ENCODE measurements at regions of chr15 and their contacts with region 1.

Region 1: DNA sequence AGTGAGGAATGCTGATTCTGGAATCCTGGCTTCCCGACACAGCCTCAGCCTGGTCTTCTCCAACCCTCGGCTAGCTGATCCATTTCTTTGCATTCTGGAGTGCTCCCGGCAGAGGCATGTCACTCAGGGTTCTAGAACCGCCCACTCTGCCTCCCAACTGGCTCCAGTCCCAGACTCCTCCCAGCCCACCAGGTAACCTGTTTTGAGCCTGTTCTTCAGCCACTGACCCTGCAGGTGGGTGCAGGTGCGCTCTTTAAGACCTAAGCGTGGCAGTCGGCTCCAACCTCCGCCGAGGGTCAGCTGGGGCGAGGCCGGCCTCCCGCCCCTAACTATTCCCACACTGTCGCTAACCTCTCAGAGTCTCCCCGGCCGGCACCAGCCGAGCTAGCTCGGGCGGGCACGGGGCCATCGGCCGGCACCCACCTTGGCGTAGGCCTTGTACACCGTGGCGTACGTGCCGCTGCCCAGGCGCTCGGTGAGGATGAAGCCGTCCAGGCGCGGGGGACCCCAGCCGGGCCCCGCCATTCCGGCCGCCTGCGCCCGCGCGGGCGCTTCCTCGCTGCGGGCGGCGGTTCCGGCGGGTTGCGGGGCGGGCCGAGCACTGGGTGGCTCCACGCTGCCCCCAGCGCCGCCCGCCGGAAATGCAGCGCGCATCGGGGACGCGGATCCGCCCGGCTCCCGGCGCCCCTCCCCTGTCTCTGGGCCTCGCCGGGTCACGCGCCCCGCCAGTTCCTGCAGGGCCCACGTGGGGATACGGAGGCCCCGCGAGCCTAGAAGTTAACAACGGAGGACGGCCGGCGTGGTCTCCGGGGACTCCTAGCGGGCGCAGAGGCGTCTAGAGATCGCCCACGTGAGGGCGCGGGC is at the start of gene ULK3:
- DNase-seq: peak; percentile 95
- ATAC-seq: peak; percentile 95
- H3K4me3 ChIP-seq: peak within 1 kb of the TSS; percentile 65 to 88 (median 72)
- H3K4me3 Mint-ChIP-seq: peak within 1 kb of the TSS; percentile 91
- H3K27ac ChIP-seq: peak within 1 kb of the TSS; percentile 78 to 81
- H3K27ac Mint-ChIP-seq: peak within 1 kb of the TSS; percentile 92
- H3K4me1 ChIP-seq: peaks cover 26 to 40% of the 10 kb centered on the region in 2 donors
- H3K4me1 Mint-ChIP-seq: peaks cover 43% of the 10 kb centered on the region
- H3K27me3 ChIP-seq: no peaks in the 10 kb centered on the region
- H3K27me3 Mint-ChIP-seq: no peaks in the 10 kb centered on the region
- CTCF ChIP-seq: peak; percentile 80
- total RNA-seq, gene ULK3: 51.1 and 55.9 TPM in 2 replicates

Region 2: GRCh38 chr15:74787251-74788041 is 55.4 kb before region 1 on chr15:
- CTCF ChIA-PET with region 1: interaction called, 7 read pairs
- POLR2A ChIA-PET with region 1: interaction called, 3 read pairs
- intact Hi-C with region 1: loop called (anchors 5 kb)
- DNase-seq: peak; percentile 98
- ATAC-seq: peak; percentile 57
- H3K4me3 ChIP-seq: peak overlapping the region; percentile 67 to 99 (median 86)
- H3K4me3 Mint-ChIP-seq: peak overlapping the region; percentile 93
- H3K27ac ChIP-seq: peak overlapping the region; percentile 90 to 93
- H3K27ac Mint-ChIP-seq: peak overlapping the region; percentile 99
- H3K4me1 ChIP-seq: peaks cover 61 to 91% of the 10 kb centered on the region in 2 donors
- H3K4me1 Mint-ChIP-seq: peaks cover 94% of the 10 kb centered on the region
- H3K27me3 ChIP-seq: no peaks in the 10 kb centered on the region
- H3K27me3 Mint-ChIP-seq: no peaks in the 10 kb centered on the region
- CTCF ChIP-seq: peak; percentile 75

Region 3: GRCh38 chr15:74857082-74857655 is 14.4 kb after region 1 on chr15:
- CTCF ChIA-PET with region 1: interaction called, 8 read pairs
- POLR2A ChIA-PET with region 1: interaction called, 10 read pairs
- intact Hi-C with region 1: no loop called
- DNase-seq: peak; percentile 61
- ATAC-seq: peak; percentile 67
- H3K4me3 ChIP-seq: no peak overlapping the region
- H3K4me3 Mint-ChIP-seq: peak overlapping the region; percentile 69
- H3K27ac ChIP-seq: peak overlapping the region in 1 of 2 donors; percentile 67
- H3K27ac Mint-ChIP-seq: peak overlapping the region; percentile 82
- H3K4me1 ChIP-seq: peaks cover 34 to 46% of the 10 kb centered on the region in 2 donors
- H3K4me1 Mint-ChIP-seq: peaks cover 40% of the 10 kb centered on the region
- H3K27me3 ChIP-seq: no peaks in the 10 kb centered on the region
- H3K27me3 Mint-ChIP-seq: no peaks in the 10 kb centered on the region
- CTCF ChIP-seq: no peak

Region 4: GRCh38 chr15:74889883-74890664 is 47.3 kb after region 1 on chr15 and contains the start of gene MPI:
- CTCF ChIA-PET with region 1: interaction called, 3 read pairs
- POLR2A ChIA-PET with region 1: interaction called, 3 read pairs
- intact Hi-C with region 1: loop called (anchors 1 kb)
- DNase-seq: peak; percentile 87
- ATAC-seq: peak; percentile 99
- H3K4me3 ChIP-seq: peak within 1 kb of the TSS; percentile 53 to 94 (median 87)
- H3K4me3 Mint-ChIP-seq: peak within 1 kb of the TSS; percentile 93
- H3K27ac ChIP-seq: peak within 1 kb of the TSS; percentile 74 to 77
- H3K27ac Mint-ChIP-seq: peak within 1 kb of the TSS; percentile 74
- H3K4me1 ChIP-seq: peaks cover 25 to 38% of the 10 kb centered on the region in 2 donors
- H3K4me1 Mint-ChIP-seq: peaks cover 39% of the 10 kb centered on the region
- H3K27me3 ChIP-seq: no peaks in the 10 kb centered on the region
- H3K27me3 Mint-ChIP-seq: no peaks in the 10 kb centered on the region
- CTCF ChIP-seq: no peak
- total RNA-seq, gene MPI: 37.2 and 41.3 TPM in 2 replicates

Region 5: GRCh38 chr15:74950078-74951000 is 107.5 kb after region 1 on chr15:
- CTCF ChIA-PET with region 1: interaction called, 11 read pairs
- POLR2A ChIA-PET with region 1: no interaction called
- intact Hi-C with region 1: no loop called
- DNase-seq: peak; percentile 86
- ATAC-seq: peak; percentile 95
- H3K4me3 ChIP-seq: no peak overlapping the region
- H3K4me3 Mint-ChIP-seq: no peak overlapping the region
- H3K27ac ChIP-seq: no peak overlapping the region
- H3K27ac Mint-ChIP-seq: no peak overlapping the region
- H3K4me1 ChIP-seq: peaks cover 6 to 8% of the 10 kb centered on the region in 2 donors
- H3K4me1 Mint-ChIP-seq: peaks cover 7% of the 10 kb centered on the region
- H3K27me3 ChIP-seq: peaks cover 0 to 22% (median 2%) of the 10 kb centered on the region in 4 experiments
- H3K27me3 Mint-ChIP-seq: peaks cover 7% of the 10 kb centered on the region
- CTCF ChIP-seq: peak; percentile 97

Region 6: GRCh38 chr15:75302318-75302717 is 459.5 kb after region 1 on chr15:
- CTCF ChIA-PET with region 1: no interaction called
- POLR2A ChIA-PET with region 1: no interaction called
- intact Hi-C with region 1: no loop called
- DNase-seq: no peak
- ATAC-seq: no peak
- H3K4me3 ChIP-seq: no peak overlapping the region
- H3K4me3 Mint-ChIP-seq: no peak overlapping the region
- H3K27ac ChIP-seq: no peak overlapping the region
- H3K27ac Mint-ChIP-seq: no peak overlapping the region
- H3K4me1 ChIP-seq: no peaks in the 10 kb centered on the region
- H3K4me1 Mint-ChIP-seq: no peaks in the 10 kb centered on the region
- H3K27me3 ChIP-seq: peaks cover 0 to 2% (median under 1%) of the 10 kb centered on the region in 4 experiments
- H3K27me3 Mint-ChIP-seq: peaks cover 29% of the 10 kb centered on the region
- CTCF ChIP-seq: no peak

Measured in B cell (primary cell).